ENCODE measurements at regions of chr3 and their contacts with region 1.

Region 1: DNA sequence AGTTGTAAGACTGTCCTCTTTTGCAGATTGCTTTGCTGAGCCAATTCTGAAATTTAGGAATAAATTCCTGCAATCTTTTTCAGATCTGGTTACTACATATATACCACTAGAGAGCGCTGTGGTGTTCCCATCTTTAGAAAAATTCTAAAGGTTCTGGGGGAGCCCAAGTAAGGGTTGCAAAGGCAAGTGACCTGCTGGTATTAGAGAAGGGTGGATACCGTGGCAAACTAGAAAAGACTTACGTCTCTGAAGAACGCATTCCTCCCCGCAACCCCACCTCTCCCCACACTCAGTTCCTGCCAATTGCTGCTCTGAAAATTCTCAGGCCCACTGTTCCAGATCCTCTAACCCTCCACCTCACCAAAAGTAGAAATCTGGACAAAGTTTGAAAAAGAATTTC is 48.5 kb downstream of the EFHB start:
- DNase-seq: no peak
- H3K4me3 ChIP-seq: no peak overlapping the region
- H3K27ac ChIP-seq: no peak overlapping the region
- H3K4me1 ChIP-seq: peaks cover 28% of the 10 kb centered on the region
- H3K27me3 ChIP-seq: no peaks in the 10 kb centered on the region
- CTCF ChIP-seq: peak; percentile 81

Region 2: DNA sequence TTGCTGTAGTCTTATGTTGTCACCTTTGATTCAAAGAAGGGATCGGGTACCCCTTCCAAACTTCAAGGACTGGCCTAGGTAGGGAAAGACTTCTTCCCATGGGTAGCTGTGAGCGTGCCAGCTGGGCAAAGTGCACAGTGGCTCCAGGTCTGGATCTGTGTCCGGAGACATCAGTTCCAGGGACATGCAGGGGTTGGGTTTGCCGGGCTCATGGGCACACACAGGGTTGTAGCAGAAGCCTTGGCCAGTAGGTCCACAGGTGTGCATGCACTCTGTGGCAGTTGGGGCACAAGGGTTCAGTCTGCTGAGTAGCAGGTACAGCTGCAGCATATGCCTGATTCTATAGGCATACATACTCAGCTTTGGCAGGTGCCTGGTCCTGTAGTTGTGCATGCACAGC is 62.7 kb before region 1 on chr3:
- CTCF ChIA-PET with region 1: no interaction called
- POLR2A ChIA-PET with region 1: no interaction called
- intact Hi-C with region 1: no loop called
- DNase-seq: no peak
- H3K4me3 ChIP-seq: no peak overlapping the region
- H3K27ac ChIP-seq: no peak overlapping the region
- H3K4me1 ChIP-seq: no peaks in the 10 kb centered on the region
- H3K27me3 ChIP-seq: no peaks in the 10 kb centered on the region
- CTCF ChIP-seq: no peak

Region 3: DNA sequence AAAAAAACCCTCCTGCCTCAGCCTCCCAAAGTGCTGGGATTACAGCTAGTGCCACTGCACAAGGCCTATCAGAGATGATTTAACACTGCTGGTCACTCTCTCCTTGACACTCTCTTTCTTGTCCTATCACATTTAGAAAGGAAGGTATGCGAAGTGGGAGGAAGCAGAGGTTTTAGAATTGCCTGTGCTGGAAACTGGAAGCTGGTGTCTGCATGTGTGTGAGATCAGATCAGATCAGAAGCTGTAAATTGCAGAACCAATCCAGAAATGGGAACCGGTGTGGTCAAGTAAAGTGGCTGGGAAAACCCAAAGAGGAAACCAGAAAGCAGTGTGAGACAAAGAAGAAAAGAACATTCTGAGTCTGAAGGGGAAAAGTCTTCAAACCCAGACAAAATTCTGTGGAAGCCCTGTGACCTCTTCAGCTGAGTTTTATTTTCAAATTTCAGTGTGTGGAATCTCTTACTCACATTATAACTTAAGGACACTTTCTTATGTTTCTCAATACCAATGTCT is 45.8 kb after region 1 on chr3:
- CTCF ChIA-PET with region 1: no interaction called
- POLR2A ChIA-PET with region 1: no interaction called
- intact Hi-C with region 1: loop called (anchors 5 kb)
- DNase-seq: no peak
- H3K4me3 ChIP-seq: no peak overlapping the region
- H3K27ac ChIP-seq: peak overlapping the region; percentile 76
- H3K4me1 ChIP-seq: peaks cover 18% of the 10 kb centered on the region
- H3K27me3 ChIP-seq: no peaks in the 10 kb centered on the region
- CTCF ChIP-seq: no peak

Region 4: DNA sequence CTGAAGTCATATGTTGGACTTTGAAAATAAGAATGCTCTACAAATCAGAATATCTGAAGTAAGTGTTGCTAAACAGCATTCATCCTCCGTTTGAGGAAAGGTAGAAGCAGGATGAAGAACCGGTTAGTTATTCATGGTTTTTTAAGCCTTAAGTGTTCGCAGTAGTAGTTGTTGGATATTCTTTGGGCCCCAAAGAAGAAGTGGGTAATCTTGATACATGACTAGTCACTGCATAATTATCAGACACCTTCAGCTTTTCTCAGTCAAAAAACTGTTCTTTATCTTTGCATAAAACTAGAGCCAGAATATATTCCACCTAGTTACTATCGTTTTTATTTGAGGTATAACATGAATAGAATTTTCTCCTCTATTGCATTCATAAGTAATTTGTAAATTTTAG is 75.2 kb after region 1 on chr3:
- CTCF ChIA-PET with region 1: no interaction called
- POLR2A ChIA-PET with region 1: no interaction called
- intact Hi-C with region 1: no loop called
- DNase-seq: no peak
- H3K4me3 ChIP-seq: no peak overlapping the region
- H3K27ac ChIP-seq: no peak overlapping the region
- H3K4me1 ChIP-seq: no peaks in the 10 kb centered on the region
- H3K27me3 ChIP-seq: no peaks in the 10 kb centered on the region
- CTCF ChIP-seq: no peak

Region 5: GRCh38 chr3:19972051-19972454 is 86.6 kb after region 1 on chr3:
- CTCF ChIA-PET with region 1: no interaction called
- POLR2A ChIA-PET with region 1: no interaction called
- intact Hi-C with region 1: loop called (anchors 2 kb)
- DNase-seq: peak in 1 of 2 experiments; percentile 92
- H3K4me3 ChIP-seq: no peak overlapping the region
- H3K27ac ChIP-seq: peak overlapping the region; percentile 55
- H3K4me1 ChIP-seq: peaks cover 33% of the 10 kb centered on the region
- H3K27me3 ChIP-seq: no peaks in the 10 kb centered on the region
- CTCF ChIP-seq: no peak

Region 6: GRCh38 chr3:20185701-20186598 is 300.5 kb after region 1 on chr3 and contains the start of gene SGO1:
- CTCF ChIA-PET with region 1: no interaction called
- POLR2A ChIA-PET with region 1: interaction called, 4 read pairs
- intact Hi-C with region 1: loop called (anchors 1 kb)
- DNase-seq: peak; percentile 91 to 98
- H3K4me3 ChIP-seq: peak within 1 kb of the TSS; percentile 93
- H3K27ac ChIP-seq: peak within 1 kb of the TSS; percentile 88
- H3K4me1 ChIP-seq: peaks cover 27% of the 10 kb centered on the region
- H3K27me3 ChIP-seq: no peaks in the 10 kb centered on the region
- CTCF ChIP-seq: no peak
- total RNA-seq, gene SGO1: 18.3 and 26.3 TPM in 2 replicates